ENCODE measurements at regions of chr3 and their contacts with region 1.

Region 1: GRCh38 chr3:184135149-184135910 is at the start of gene EIF2B5:
- DNase-seq: peak; percentile 63 to 87 (median 84)
- ATAC-seq: peak; percentile 96
- H3K4me3 ChIP-seq: peak within 1 kb of the TSS; percentile 83
- H3K4me3 Mint-ChIP-seq: peak within 1 kb of the TSS; percentile 96 to 100 (median 98)
- H3K27ac ChIP-seq: peak within 1 kb of the TSS; percentile 86
- H3K27ac Mint-ChIP-seq: peak within 1 kb of the TSS; percentile 92 to 98 (median 97)
- H3K4me1 ChIP-seq: peaks cover 4 to 10% of the 10 kb centered on the region in 2 donors
- H3K4me1 Mint-ChIP-seq: peaks cover 29 to 40% (median 38%) of the 10 kb centered on the region in 7 donors
- H3K27me3 ChIP-seq: no peaks in the 10 kb centered on the region
- H3K27me3 Mint-ChIP-seq: peaks cover 0 to 10% (median 0%) of the 10 kb centered on the region in 5 donors
- total RNA-seq, gene EIF2B5: 47.2 to 87.2 (median 67.7) TPM

Region 2: GRCh38 chr3:183895296-183895695 is 240.0 kb before region 1 on chr3:
- CTCF ChIA-PET with region 1: interaction called, 5 read pairs
- POLR2A ChIA-PET with region 1: no interaction called
- intact Hi-C with region 1: loop called (anchors 1 to 2 kb)
- DNase-seq: peak in 7 of 9 donors; percentile 19 to 67 (median 49)
- ATAC-seq: peak; percentile 91
- H3K4me3 ChIP-seq: no peak overlapping the region
- H3K4me3 Mint-ChIP-seq: no peak overlapping the region
- H3K27ac ChIP-seq: no peak overlapping the region
- H3K27ac Mint-ChIP-seq: peak overlapping the region in 1 of 9 donors; percentile 18
- H3K4me1 ChIP-seq: no peaks in the 10 kb centered on the region
- H3K4me1 Mint-ChIP-seq: peaks cover 0 to 6% (median 0%) of the 10 kb centered on the region in 7 donors
- H3K27me3 ChIP-seq: peaks cover 0 to 3% of the 10 kb centered on the region in 2 donors
- H3K27me3 Mint-ChIP-seq: peaks cover 7 to 29% (median 11%) of the 10 kb centered on the region in 5 donors

Region 3: GRCh38 chr3:184154885-184155643 is 19.7 kb after region 1 on chr3 and contains the start of gene DVL3:
- CTCF ChIA-PET with region 1: no interaction called
- POLR2A ChIA-PET with region 1: interaction called, 12 read pairs
- intact Hi-C with region 1: loop called (anchors 1 kb)
- DNase-seq: peak in 7 of 9 donors; percentile 31 to 75 (median 39)
- ATAC-seq: peak; percentile 82
- H3K4me3 ChIP-seq: peak within 1 kb of the TSS; percentile 84
- H3K4me3 Mint-ChIP-seq: peak within 1 kb of the TSS; percentile 94 to 100 (median 96)
- H3K27ac ChIP-seq: peak within 1 kb of the TSS; percentile 60
- H3K27ac Mint-ChIP-seq: peak within 1 kb of the TSS; percentile 81 to 91 (median 87)
- H3K4me1 ChIP-seq: peaks cover 10 to 13% of the 10 kb centered on the region in 2 donors
- H3K4me1 Mint-ChIP-seq: peaks cover 14 to 39% (median 28%) of the 10 kb centered on the region in 7 donors
- H3K27me3 ChIP-seq: no peaks in the 10 kb centered on the region
- H3K27me3 Mint-ChIP-seq: no peaks in the 10 kb centered on the region
- total RNA-seq, gene DVL3: 32.0 to 45.3 (median 39.4) TPM

Region 4: DNA sequence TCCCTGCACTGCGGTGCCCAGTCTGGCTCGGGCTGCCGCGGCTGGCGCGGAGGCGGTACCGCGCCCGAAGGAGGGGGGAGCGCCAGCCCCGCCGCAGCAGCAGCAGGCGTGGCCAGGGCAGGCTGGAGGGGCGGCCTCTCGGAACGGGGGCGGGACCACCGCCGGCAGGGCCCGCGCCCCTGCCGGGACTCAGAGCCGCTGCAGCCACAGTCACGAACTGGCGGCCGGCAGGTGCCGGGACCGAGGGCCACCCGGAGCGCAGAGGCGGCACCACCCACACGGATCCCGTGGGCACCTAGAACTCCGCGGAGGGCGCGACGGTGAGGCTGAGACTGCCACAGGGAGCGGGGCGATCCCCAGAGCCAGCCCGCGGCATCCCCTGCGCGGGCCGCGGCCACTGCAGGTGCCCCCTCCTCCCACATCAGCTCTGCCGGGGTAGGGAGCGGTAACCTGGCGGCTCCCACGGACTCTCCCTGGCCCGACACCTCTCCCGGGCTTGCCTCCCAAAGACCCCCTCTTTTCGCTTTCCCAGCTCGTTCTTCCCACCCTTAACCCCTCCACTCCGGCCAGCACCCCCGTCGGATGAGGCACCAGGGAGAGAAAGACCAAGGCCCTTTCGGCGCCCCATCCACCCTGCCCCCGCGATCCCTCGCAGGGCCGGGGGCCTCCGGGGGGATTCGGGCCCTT is 94.2 kb after region 1 on chr3 and contains the start of gene VWA5B2:
- CTCF ChIA-PET with region 1: no interaction called
- POLR2A ChIA-PET with region 1: no interaction called
- intact Hi-C with region 1: loop called in 1 of 2 experiments (anchors 1 kb)
- DNase-seq: peak; percentile 58 to 72 (median 66)
- ATAC-seq: peak; percentile 96
- H3K4me3 ChIP-seq: peak within 1 kb of the TSS; percentile 58
- H3K4me3 Mint-ChIP-seq: peak within 1 kb of the TSS; percentile 41 to 82 (median 74)
- H3K27ac ChIP-seq: no peak within 1 kb of the TSS
- H3K27ac Mint-ChIP-seq: no peak within 1 kb of the TSS
- H3K4me1 ChIP-seq: peaks cover 0 to 5% of the 10 kb centered on the region in 2 donors
- H3K4me1 Mint-ChIP-seq: peaks cover 8 to 14% (median 10%) of the 10 kb centered on the region in 7 donors
- H3K27me3 ChIP-seq: peaks cover 4 to 17% of the 10 kb centered on the region in 2 donors
- H3K27me3 Mint-ChIP-seq: peaks cover 46 to 65% (median 57%) of the 10 kb centered on the region in 5 donors
- total RNA-seq, gene VWA5B2: not detected

Region 5: DNA sequence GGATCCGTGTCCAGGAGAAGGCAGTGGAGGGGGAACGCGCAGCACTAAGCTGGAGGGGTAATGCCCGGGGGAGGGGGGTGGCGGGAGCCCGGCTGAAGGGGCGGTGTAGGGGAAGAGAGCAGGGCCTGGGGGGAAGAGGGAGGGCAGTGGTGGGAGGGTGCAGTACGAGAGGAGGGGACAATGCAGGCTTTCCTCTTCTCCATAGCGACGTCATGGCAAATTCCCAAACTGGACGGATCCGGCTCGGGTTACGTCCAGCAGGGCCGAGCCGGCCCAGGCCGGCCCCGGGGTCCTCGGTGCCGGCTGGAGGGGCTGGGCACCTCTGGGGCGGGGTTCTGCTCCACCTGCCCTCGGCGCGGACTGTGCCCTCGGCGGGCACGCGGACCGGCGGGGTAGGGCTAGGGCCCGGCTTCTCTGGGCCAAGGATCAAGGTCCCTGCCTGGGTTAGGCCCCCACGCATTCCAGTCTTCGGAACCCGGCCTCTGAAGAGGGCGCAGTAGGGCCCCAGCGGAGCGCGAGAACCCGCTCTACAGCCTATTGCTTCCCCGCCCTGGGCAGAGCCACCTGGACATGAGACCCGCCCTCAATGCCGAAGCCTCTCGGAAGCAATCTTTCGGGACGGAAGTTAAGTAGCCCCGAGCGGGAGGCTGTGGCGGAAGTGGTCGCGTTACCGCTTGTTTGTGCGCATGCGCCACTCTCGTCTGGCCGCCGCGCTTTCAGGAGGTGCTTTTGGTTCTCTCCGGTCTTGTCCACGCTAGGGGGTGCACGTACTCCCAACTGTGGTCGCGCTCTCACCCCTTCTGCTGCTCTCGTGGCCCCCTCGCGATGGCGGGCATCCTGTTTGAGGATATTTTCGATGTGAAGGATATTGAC is 227.6 kb after region 1 on chr3:
- CTCF ChIA-PET with region 1: no interaction called
- POLR2A ChIA-PET with region 1: interaction called, 3 read pairs
- intact Hi-C with region 1: loop called (anchors 1 kb)
- DNase-seq: peak; percentile 74 to 94 (median 90)
- ATAC-seq: peak; percentile 87
- H3K4me3 ChIP-seq: peak overlapping the region; percentile 97
- H3K4me3 Mint-ChIP-seq: peak overlapping the region; percentile 95 to 100 (median 99)
- H3K27ac ChIP-seq: peak overlapping the region; percentile 84
- H3K27ac Mint-ChIP-seq: peak overlapping the region; percentile 91 to 98 (median 97)
- H3K4me1 ChIP-seq: peaks cover 11 to 13% of the 10 kb centered on the region in 2 donors
- H3K4me1 Mint-ChIP-seq: peaks cover 25 to 37% (median 30%) of the 10 kb centered on the region in 7 donors
- H3K27me3 ChIP-seq: no peaks in the 10 kb centered on the region
- H3K27me3 Mint-ChIP-seq: peaks cover 0 to 13% (median 0%) of the 10 kb centered on the region in 5 donors

Region 6: GRCh38 chr3:184688251-184688881 is 553.0 kb after region 1 on chr3:
- CTCF ChIA-PET with region 1: no interaction called
- POLR2A ChIA-PET with region 1: no interaction called
- intact Hi-C with region 1: no loop called
- DNase-seq: no peak
- ATAC-seq: no peak
- H3K4me3 ChIP-seq: no peak overlapping the region
- H3K4me3 Mint-ChIP-seq: no peak overlapping the region
- H3K27ac ChIP-seq: no peak overlapping the region
- H3K27ac Mint-ChIP-seq: no peak overlapping the region
- H3K4me1 ChIP-seq: no peaks in the 10 kb centered on the region
- H3K4me1 Mint-ChIP-seq: peaks cover 0 to 2% (median 0%) of the 10 kb centered on the region in 7 donors
- H3K27me3 ChIP-seq: no peaks in the 10 kb centered on the region
- H3K27me3 Mint-ChIP-seq: peaks cover 0 to 17% (median 0%) of the 10 kb centered on the region in 5 donors

Region 7: GRCh38 chr3:184737641-184738535 is 602.6 kb after region 1 on chr3:
- CTCF ChIA-PET with region 1: no interaction called
- POLR2A ChIA-PET with region 1: no interaction called
- intact Hi-C with region 1: no loop called
- DNase-seq: peak in 1 of 9 donors; percentile 4
- ATAC-seq: no peak
- H3K4me3 ChIP-seq: no peak overlapping the region
- H3K4me3 Mint-ChIP-seq: no peak overlapping the region
- H3K27ac ChIP-seq: no peak overlapping the region
- H3K27ac Mint-ChIP-seq: no peak overlapping the region
- H3K4me1 ChIP-seq: no peaks in the 10 kb centered on the region
- H3K4me1 Mint-ChIP-seq: no peaks in the 10 kb centered on the region
- H3K27me3 ChIP-seq: no peaks in the 10 kb centered on the region
- H3K27me3 Mint-ChIP-seq: peaks cover 0 to 11% (median 5%) of the 10 kb centered on the region in 5 donors

Measured in naive thymus-derived CD4-positive, alpha-beta T cell (primary cell).